ENCODE measurements at regions of chr12 and their contacts with region 1.

Region 1: GRCh38 chr12:93645702-93646101 is 31.5 kb upstream of the CRADD start:
- DNase-seq: no peak
- ATAC-seq: no peak
- H3K4me3 ChIP-seq: no peak overlapping the region
- H3K27ac ChIP-seq: no peak overlapping the region
- H3K4me1 ChIP-seq: no peaks in the 10 kb centered on the region
- CTCF ChIP-seq: no peak
- EP300 ChIP-seq: no peak
- POLR2A ChIP-seq: no peak
- RAD21 ChIP-seq: no peak

Region 2: DNA sequence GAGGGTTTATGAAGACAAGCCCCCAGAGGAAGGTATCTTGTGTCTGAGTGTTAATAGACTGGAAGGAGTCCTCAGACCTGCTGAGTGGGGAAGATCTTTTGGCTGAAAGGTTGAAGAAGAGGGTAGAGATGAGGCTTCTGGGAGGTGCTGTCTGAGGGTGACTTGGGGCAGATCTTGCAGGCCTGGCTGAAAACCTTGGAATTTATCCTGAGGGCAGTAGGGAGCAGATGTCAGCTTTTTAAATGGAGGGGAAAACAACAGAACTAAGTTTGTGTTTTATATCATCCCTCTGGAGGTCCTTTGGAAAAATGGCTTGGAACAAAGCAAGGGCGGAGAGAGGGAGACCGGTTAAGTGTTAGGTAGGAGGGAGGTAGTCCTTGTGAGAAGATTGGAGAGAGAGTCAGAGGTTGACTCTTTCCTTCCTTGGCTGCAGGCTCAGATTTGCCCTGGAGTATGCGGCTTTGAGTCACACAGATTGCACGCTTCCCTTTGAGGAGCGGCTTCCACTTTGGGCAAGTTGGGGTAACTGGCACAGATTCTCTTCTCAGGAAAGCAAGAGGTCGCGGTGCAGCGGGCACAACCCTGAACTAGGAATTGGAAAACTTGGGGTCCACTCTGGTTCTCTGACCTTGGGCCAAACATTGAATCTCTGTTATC is 63.5 kb before region 1 on chr12:
- CTCF ChIA-PET with region 1: no interaction called
- POLR2A ChIA-PET with region 1: no interaction called
- DNase-seq: no peak
- ATAC-seq: no peak
- H3K4me3 ChIP-seq: no peak overlapping the region
- H3K27ac ChIP-seq: no peak overlapping the region
- H3K4me1 ChIP-seq: no peaks in the 10 kb centered on the region
- CTCF ChIP-seq: no peak
- EP300 ChIP-seq: no peak
- POLR2A ChIP-seq: no peak
- RAD21 ChIP-seq: no peak

Region 3: DNA sequence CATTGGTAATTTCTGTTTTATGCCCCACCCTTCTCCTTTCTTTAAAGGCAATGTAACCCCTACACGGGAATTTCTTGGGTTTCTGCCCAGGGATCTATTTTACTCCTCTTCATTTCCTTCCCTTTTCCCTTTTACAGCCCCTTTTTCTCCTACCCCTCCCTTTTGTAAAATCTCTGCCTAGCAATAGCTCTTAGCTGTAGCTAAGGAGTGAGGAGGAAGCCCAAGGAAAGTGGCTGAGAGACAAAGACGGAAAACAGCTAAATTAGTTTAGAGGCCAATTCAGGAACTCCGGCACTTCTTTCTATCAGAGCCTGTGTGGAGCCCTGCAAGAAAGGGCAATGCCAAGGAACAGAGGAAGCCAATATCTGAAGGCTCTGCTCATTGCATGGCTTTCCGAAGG is 32.9 kb before region 1 on chr12:
- CTCF ChIA-PET with region 1: no interaction called
- POLR2A ChIA-PET with region 1: no interaction called
- DNase-seq: no peak
- ATAC-seq: no peak
- H3K4me3 ChIP-seq: no peak overlapping the region
- H3K27ac ChIP-seq: no peak overlapping the region
- H3K4me1 ChIP-seq: no peaks in the 10 kb centered on the region
- CTCF ChIP-seq: no peak
- EP300 ChIP-seq: no peak
- POLR2A ChIP-seq: no peak
- RAD21 ChIP-seq: no peak

Region 4: DNA sequence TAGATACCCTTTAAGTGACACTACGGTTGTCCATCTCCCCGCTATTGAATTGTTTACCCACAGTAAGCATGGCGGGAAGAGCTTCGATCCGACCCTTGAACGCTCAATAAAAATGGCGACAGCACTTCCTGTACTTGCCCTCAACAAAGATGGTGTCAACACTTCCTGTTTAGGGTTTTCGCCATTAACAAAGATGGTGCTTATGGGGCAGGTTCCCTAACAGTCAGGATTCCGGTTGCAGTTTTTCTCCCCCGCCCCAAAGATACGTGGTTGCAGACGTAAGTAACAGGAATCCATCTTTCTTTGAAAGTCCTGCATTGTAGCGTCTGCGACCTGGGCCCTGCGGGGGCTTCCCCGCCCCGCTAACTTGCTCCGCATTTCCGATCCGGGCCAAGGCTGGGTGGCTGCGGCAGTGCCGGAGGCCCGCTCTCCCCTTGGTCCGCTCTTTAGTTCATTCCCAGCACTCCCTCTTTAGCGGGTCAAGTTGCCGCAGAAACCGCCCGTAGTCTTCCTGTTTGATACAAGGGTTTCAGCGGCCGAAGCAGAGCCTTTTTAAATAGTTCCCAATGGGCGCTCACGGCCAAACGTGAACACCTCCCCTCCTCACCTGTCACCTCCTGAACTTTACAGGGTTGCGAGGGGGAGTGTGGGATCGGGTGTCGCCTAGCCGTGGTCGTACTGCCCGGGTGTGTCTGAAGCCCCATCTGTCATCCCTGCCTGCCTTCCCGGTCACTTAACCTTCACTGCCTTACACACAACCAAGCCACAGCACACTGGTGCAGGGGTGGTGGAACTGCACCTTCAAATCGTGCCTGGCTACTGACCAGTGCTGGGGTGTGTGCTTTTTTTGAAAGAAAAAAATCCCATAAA is 31.7 kb after region 1 on chr12 and contains the start of gene CRADD:
- CTCF ChIA-PET with region 1: no interaction called
- POLR2A ChIA-PET with region 1: interaction called, 15 read pairs
- DNase-seq: peak; percentile 76 to 99
- ATAC-seq: peak; percentile 90 to 96
- H3K4me3 ChIP-seq: peak within 1 kb of the TSS; percentile 79
- H3K27ac ChIP-seq: peak within 1 kb of the TSS; percentile 92 to 93
- H3K4me1 ChIP-seq: peaks cover 7% of the 10 kb centered on the region; the same call in 2 of the 3 replicates
- CTCF ChIP-seq: no peak
- EP300 ChIP-seq: no peak
- POLR2A ChIP-seq: peak; percentile 59
- RAD21 ChIP-seq: no peak; a peak in 2 of 5 replicates
- polyA plus RNA-seq, gene CRADD: 21.8 and 23.0 TPM in 2 replicates

Measured in A549 (cell line).